ENCODE measurements at regions of chr5 and their contacts with region 1.

Region 1: DNA sequence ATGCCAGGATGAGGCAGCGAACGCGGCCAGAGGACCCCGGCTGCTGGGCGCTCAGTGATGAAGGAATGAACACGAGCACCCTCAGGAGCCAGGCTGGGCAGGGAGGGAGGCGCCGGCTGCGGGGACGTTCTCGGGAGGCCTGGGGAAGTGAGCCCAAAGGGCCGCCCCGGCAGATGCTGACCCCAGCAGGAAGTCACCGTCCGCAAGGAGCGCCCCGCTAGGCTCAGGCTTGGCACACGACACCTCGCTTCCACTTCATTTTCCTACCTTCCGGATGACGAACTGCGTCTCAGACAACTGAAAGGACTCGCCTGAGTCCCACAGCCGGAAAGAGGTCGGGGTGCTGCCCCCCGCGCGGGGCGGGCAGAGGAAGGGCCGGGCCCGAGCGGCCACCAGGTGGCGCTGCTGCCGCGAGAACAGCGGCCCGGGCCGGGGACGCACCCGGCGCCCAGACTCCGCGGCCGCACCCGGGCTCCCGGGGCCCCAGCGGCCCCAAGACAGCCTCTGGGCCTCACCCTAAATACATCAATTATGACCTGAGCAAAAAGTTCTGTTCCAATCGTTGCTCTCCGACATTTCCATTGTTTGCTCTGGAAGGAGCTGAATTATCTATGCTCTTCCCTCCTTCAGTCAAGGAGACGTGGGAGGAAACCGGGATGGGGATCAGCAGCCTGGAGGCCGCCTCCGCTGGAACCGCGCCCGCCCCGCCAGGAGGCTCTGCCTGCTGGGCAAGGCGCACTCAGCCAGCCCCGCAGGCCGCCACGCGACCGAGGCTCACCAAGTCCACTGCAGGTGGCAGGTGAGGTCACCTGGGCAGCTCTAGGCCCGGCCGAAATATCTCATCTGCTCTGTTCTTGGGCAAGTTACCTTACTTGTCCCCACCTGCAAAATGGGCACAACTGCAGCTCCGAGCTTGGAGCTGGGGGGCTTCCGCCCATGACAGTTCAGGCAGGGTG is 107.0 kb downstream of the ZNF354C start:
- DNase-seq: peak; percentile 69 to 77
- ATAC-seq: peak; percentile 86 to 95 (median 90)
- H3K4me3 ChIP-seq: peak overlapping the region; percentile 21
- H3K4me3 Mint-ChIP-seq: peak overlapping the region; percentile 53
- H3K27ac ChIP-seq: no peak overlapping the region
- H3K27ac Mint-ChIP-seq: peak overlapping the region in 1 of 2 donors; percentile 41
- H3K4me1 ChIP-seq: peaks cover 14% of the 10 kb centered on the region
- H3K4me1 Mint-ChIP-seq: peaks cover 6 to 7% of the 10 kb centered on the region in 2 donors
- H3K27me3 ChIP-seq: no peaks in the 10 kb centered on the region
- H3K27me3 Mint-ChIP-seq: peaks cover 0 to 6% of the 10 kb centered on the region in 2 donors
- CTCF ChIP-seq: peak; percentile 98

Region 2: GRCh38 chr5:177390363-177391300 is 1776.5 kb before region 1 on chr5:
- intact Hi-C with region 1: no loop called
- DNase-seq: peak; percentile 83 to 96
- ATAC-seq: peak; percentile 71 to 89 (median 84)
- H3K4me3 ChIP-seq: no peak overlapping the region
- H3K4me3 Mint-ChIP-seq: peak overlapping the region; percentile 52
- H3K27ac ChIP-seq: peak overlapping the region; percentile 79
- H3K27ac Mint-ChIP-seq: peak overlapping the region; percentile 81 to 82
- H3K4me1 ChIP-seq: peaks cover 59% of the 10 kb centered on the region
- H3K4me1 Mint-ChIP-seq: peaks cover 30 to 34% of the 10 kb centered on the region in 2 donors
- H3K27me3 ChIP-seq: no peaks in the 10 kb centered on the region
- H3K27me3 Mint-ChIP-seq: peaks cover 0 to 2% of the 10 kb centered on the region in 2 donors
- CTCF ChIP-seq: peak; percentile 95

Region 3: GRCh38 chr5:179154991-179155955 is 11.9 kb before region 1 on chr5:
- intact Hi-C with region 1: no loop called
- DNase-seq: no peak
- ATAC-seq: no peak
- H3K4me3 ChIP-seq: no peak overlapping the region
- H3K4me3 Mint-ChIP-seq: no peak overlapping the region
- H3K27ac ChIP-seq: no peak overlapping the region
- H3K27ac Mint-ChIP-seq: no peak overlapping the region
- H3K4me1 ChIP-seq: no peaks in the 10 kb centered on the region
- H3K4me1 Mint-ChIP-seq: no peaks in the 10 kb centered on the region
- H3K27me3 ChIP-seq: no peaks in the 10 kb centered on the region
- H3K27me3 Mint-ChIP-seq: no peaks in the 10 kb centered on the region
- CTCF ChIP-seq: no peak

Region 4: GRCh38 chr5:179212870-179213269 is 45.7 kb after region 1 on chr5:
- intact Hi-C with region 1: no loop called
- DNase-seq: no peak
- ATAC-seq: no peak
- H3K4me3 ChIP-seq: no peak overlapping the region
- H3K4me3 Mint-ChIP-seq: no peak overlapping the region
- H3K27ac ChIP-seq: no peak overlapping the region
- H3K27ac Mint-ChIP-seq: no peak overlapping the region
- H3K4me1 ChIP-seq: no peaks in the 10 kb centered on the region
- H3K4me1 Mint-ChIP-seq: no peaks in the 10 kb centered on the region
- H3K27me3 ChIP-seq: no peaks in the 10 kb centered on the region
- H3K27me3 Mint-ChIP-seq: no peaks in the 10 kb centered on the region
- CTCF ChIP-seq: no peak

Region 5: GRCh38 chr5:179494774-179495526 is 327.8 kb after region 1 on chr5:
- intact Hi-C with region 1: loop called (anchors 5 kb)
- DNase-seq: peak in 1 of 2 donors; percentile 1
- ATAC-seq: no peak
- H3K4me3 ChIP-seq: no peak overlapping the region
- H3K4me3 Mint-ChIP-seq: no peak overlapping the region
- H3K27ac ChIP-seq: no peak overlapping the region
- H3K27ac Mint-ChIP-seq: no peak overlapping the region
- H3K4me1 ChIP-seq: no peaks in the 10 kb centered on the region
- H3K4me1 Mint-ChIP-seq: no peaks in the 10 kb centered on the region
- H3K27me3 ChIP-seq: no peaks in the 10 kb centered on the region
- H3K27me3 Mint-ChIP-seq: peaks cover 0 to 2% of the 10 kb centered on the region in 2 donors
- CTCF ChIP-seq: no peak

Region 6: DNA sequence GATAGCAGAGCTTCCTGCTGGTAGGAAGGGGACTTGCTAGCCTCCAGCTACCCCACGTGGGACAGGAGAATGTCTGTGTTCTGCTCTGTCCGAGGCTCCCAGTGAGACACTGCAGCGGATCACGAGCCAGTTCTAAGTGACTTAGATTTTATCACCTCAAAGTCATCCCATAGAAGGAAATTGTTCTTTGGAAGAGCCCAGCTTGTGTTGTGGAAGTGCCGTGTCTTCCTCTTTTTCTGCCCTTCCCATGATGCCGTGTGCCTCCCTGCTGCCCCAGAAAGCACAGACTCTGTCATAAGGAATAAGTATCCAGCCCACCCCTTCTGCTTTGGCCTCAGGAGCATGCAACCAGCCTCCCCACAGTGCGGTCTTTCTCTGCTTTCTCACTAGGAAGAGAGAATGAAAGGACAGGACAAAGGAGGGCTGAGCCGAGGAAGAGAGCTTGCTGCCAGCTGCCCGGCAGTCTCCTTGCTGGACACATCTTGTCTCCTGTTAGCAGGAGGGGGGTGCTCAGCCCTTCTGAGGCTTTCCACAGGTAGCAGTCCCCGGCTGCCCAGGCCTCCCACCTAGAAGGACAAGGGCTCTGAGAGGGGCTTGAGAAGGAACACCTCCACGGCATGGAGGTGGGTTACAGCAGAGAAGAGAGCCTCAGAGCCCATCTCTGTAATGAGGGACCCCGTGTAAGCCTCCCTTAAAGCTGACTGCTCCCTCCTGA is 418.9 kb after region 1 on chr5:
- intact Hi-C with region 1: loop called (anchors 5 kb)
- DNase-seq: no peak
- ATAC-seq: no peak
- H3K4me3 ChIP-seq: no peak overlapping the region
- H3K4me3 Mint-ChIP-seq: no peak overlapping the region
- H3K27ac ChIP-seq: no peak overlapping the region
- H3K27ac Mint-ChIP-seq: peak overlapping the region in 1 of 2 donors; percentile 18
- H3K4me1 ChIP-seq: no peaks in the 10 kb centered on the region
- H3K4me1 Mint-ChIP-seq: peaks cover 0 to 4% of the 10 kb centered on the region in 2 donors
- H3K27me3 ChIP-seq: no peaks in the 10 kb centered on the region
- H3K27me3 Mint-ChIP-seq: no peaks in the 10 kb centered on the region
- CTCF ChIP-seq: no peak

Region 7: DNA sequence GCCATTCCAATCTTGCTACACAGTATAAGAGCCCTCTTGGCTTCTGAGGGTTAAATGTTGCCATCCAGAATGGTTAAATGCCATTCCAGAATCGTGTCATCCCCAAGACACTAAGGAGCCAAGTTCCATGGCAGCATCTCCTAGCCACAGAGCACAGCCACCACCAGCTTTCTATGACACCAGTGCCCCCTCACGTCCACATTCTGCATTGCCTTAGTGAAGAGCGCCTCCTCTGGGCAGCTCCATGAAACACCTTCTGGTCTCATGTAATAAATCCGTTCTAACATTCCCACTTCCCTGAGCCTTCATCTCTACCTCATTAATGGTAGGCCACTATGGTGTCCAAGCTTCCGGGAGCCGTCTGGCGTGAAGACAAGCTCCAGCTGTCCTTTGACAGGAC is 501.2 kb after region 1 on chr5:
- intact Hi-C with region 1: loop called (anchors 5 kb)
- DNase-seq: peak in 1 of 2 donors; percentile 70
- ATAC-seq: peak; percentile 72 to 96 (median 80)
- H3K4me3 ChIP-seq: no peak overlapping the region
- H3K4me3 Mint-ChIP-seq: no peak overlapping the region
- H3K27ac ChIP-seq: no peak overlapping the region
- H3K27ac Mint-ChIP-seq: no peak overlapping the region
- H3K4me1 ChIP-seq: no peaks in the 10 kb centered on the region
- H3K4me1 Mint-ChIP-seq: peaks cover 4 to 5% of the 10 kb centered on the region in 2 donors
- H3K27me3 ChIP-seq: no peaks in the 10 kb centered on the region
- H3K27me3 Mint-ChIP-seq: no peaks in the 10 kb centered on the region
- CTCF ChIP-seq: peak; percentile 71

Measured in natural killer cell (primary cell).